Natural killer cell (primary cell): ENCODE measurements at regions of chr5 and their contacts with region 1.

Region 1: DNA sequence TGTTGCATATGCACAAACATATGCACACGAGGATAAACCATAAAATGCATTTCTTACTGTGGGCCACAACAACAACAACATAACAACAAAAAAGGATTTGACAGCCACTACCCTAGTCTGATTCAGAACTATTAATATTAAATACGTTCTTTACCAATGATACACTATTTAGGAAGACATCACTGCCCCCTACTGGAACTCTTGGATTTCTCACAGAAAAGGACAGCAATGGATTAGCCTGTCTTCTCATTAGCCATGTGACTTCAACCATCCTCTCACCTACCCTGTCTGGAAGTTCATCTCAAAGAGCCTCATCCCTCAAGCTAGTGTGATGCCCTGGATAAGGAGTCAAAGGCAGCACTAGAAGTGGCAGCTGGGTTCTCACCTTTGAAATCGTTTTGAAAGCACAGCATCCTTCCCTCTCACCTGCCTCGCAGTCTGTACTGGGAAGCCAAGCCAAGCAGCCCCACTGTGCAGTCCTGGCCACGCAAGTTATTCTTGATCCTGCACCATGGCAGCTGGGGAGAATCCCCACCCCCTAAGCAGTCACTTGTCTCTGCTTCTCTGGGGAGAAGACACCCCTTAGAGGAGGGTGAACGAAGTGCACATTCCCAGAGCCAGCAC is 64.6 kb downstream of the SH3TC2 start:
- DNase-seq: peak in 1 of 2 donors; percentile 74
- ATAC-seq: peak; percentile 71 to 92 (median 86)
- H3K4me3 ChIP-seq: no peak overlapping the region
- H3K4me3 Mint-ChIP-seq: no peak overlapping the region
- H3K27ac ChIP-seq: no peak overlapping the region
- H3K27ac Mint-ChIP-seq: no peak overlapping the region
- H3K4me1 ChIP-seq: no peaks in the 10 kb centered on the region
- H3K4me1 Mint-ChIP-seq: peaks cover 4% of the 10 kb centered on the region in 2 donors
- H3K27me3 ChIP-seq: no peaks in the 10 kb centered on the region
- H3K27me3 Mint-ChIP-seq: peaks cover 11% of the 10 kb centered on the region in 2 donors
- CTCF ChIP-seq: peak; percentile 77

Region 2: GRCh38 chr5:148740966-148741742 is 257.1 kb before region 1 on chr5:
- intact Hi-C with region 1: loop called (anchors 1 kb)
- DNase-seq: peak in 1 of 2 donors; percentile 73
- ATAC-seq: peak in 2 of 3 donors; percentile 70 to 73
- H3K4me3 ChIP-seq: no peak overlapping the region
- H3K4me3 Mint-ChIP-seq: no peak overlapping the region
- H3K27ac ChIP-seq: no peak overlapping the region
- H3K27ac Mint-ChIP-seq: no peak overlapping the region
- H3K4me1 ChIP-seq: no peaks in the 10 kb centered on the region
- H3K4me1 Mint-ChIP-seq: no peaks in the 10 kb centered on the region
- H3K27me3 ChIP-seq: no peaks in the 10 kb centered on the region
- H3K27me3 Mint-ChIP-seq: peaks cover 5 to 7% of the 10 kb centered on the region in 2 donors
- CTCF ChIP-seq: peak; percentile 79

Region 3: GRCh38 chr5:148820461-148821395 is 177.6 kb before region 1 on chr5:
- intact Hi-C with region 1: loop called (anchors 1 kb)
- DNase-seq: peak in 1 of 2 donors; percentile 70
- ATAC-seq: peak in 2 of 3 donors; percentile 57 to 73
- H3K4me3 ChIP-seq: no peak overlapping the region
- H3K4me3 Mint-ChIP-seq: no peak overlapping the region
- H3K27ac ChIP-seq: no peak overlapping the region
- H3K27ac Mint-ChIP-seq: no peak overlapping the region
- H3K4me1 ChIP-seq: peaks cover 11% of the 10 kb centered on the region
- H3K4me1 Mint-ChIP-seq: peaks cover 17 to 20% of the 10 kb centered on the region in 2 donors
- H3K27me3 ChIP-seq: no peaks in the 10 kb centered on the region
- H3K27me3 Mint-ChIP-seq: no peaks in the 10 kb centered on the region
- CTCF ChIP-seq: peak; percentile 71

Region 4: DNA sequence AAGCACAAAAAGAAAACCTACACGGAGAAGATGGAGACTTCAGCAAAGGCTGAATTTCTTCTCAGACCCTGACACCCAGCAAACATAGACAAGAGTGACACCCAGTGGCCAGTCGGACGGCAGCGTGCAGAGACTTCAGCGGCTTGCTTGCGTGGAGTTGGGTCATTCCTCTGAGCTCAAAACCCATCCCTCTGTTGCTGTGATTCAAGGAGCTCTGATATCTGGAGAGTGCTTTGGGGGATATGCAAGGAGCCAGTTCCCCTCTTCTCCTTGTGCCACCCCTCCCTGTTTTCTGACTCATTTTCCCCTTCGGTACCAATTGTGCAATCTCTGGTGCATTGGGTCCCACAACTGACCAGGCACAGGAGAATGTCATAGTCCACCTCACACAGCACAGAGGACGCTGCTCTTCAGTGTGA is 37.1 kb after region 1 on chr5:
- intact Hi-C with region 1: loop called (anchors 2 kb)
- DNase-seq: peak; percentile 61 to 80
- ATAC-seq: peak; percentile 79 to 89 (median 87)
- H3K4me3 ChIP-seq: no peak overlapping the region
- H3K4me3 Mint-ChIP-seq: no peak overlapping the region
- H3K27ac ChIP-seq: no peak overlapping the region
- H3K27ac Mint-ChIP-seq: no peak overlapping the region
- H3K4me1 ChIP-seq: peaks cover 12% of the 10 kb centered on the region
- H3K4me1 Mint-ChIP-seq: peaks cover 36 to 49% of the 10 kb centered on the region in 2 donors
- H3K27me3 ChIP-seq: no peaks in the 10 kb centered on the region
- H3K27me3 Mint-ChIP-seq: no peaks in the 10 kb centered on the region
- CTCF ChIP-seq: peak; percentile 84

Region 5: GRCh38 chr5:149264439-149265067 is 266.3 kb after region 1 on chr5:
- intact Hi-C with region 1: no loop called
- DNase-seq: peak in 1 of 2 donors; percentile 65
- ATAC-seq: peak; percentile 42 to 75 (median 59)
- H3K4me3 ChIP-seq: no peak overlapping the region
- H3K4me3 Mint-ChIP-seq: no peak overlapping the region
- H3K27ac ChIP-seq: no peak overlapping the region
- H3K27ac Mint-ChIP-seq: no peak overlapping the region
- H3K4me1 ChIP-seq: no peaks in the 10 kb centered on the region
- H3K4me1 Mint-ChIP-seq: peaks cover 0 to 4% of the 10 kb centered on the region in 2 donors
- H3K27me3 ChIP-seq: no peaks in the 10 kb centered on the region
- H3K27me3 Mint-ChIP-seq: peaks cover 0 to 15% of the 10 kb centered on the region in 2 donors
- CTCF ChIP-seq: no peak

Region 6: DNA sequence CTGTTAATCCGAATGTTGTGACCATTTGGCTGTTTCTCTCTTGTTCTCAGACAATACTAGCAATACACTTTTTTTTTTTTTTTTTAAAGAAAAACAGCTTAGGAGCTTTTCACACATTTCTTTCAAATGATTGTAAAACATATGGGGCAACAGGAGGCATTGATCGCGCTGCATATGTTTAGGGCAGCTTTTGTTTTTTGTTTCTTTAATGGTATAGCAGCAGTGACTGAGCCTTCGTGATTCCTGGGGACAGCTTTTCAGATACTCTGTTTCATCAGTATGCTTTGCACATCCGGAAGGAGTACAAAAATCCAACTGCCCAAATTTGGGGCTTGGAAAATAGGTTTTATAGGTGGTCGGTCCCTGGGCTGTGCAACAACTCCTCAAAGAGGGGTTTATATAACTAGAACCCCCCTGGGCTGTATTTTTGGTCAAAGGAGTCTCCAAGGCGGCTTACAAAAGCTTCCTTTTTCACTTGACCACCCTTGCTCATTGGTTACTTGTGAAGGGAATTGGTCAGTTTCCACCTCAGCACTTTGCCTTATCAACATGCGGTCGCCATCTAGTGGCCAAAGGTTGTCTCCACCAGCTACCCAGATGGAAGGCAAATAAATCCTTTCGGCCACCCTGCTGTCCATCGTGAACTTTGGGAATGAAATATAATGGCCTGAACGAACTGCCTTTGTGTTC is 854.5 kb after region 1 on chr5:
- intact Hi-C with region 1: no loop called
- DNase-seq: peak; percentile 27 to 60
- ATAC-seq: peak in 1 of 3 donors; percentile 43
- H3K4me3 ChIP-seq: no peak overlapping the region
- H3K4me3 Mint-ChIP-seq: no peak overlapping the region
- H3K27ac ChIP-seq: no peak overlapping the region
- H3K27ac Mint-ChIP-seq: no peak overlapping the region
- H3K4me1 ChIP-seq: no peaks in the 10 kb centered on the region
- H3K4me1 Mint-ChIP-seq: no peaks in the 10 kb centered on the region
- H3K27me3 ChIP-seq: no peaks in the 10 kb centered on the region
- H3K27me3 Mint-ChIP-seq: no peaks in the 10 kb centered on the region
- CTCF ChIP-seq: peak; percentile 86